CD8-positive, alpha-beta T cell (primary cell): ENCODE measurements at regions of chr15 and their contacts with region 1.

Region 1: DNA sequence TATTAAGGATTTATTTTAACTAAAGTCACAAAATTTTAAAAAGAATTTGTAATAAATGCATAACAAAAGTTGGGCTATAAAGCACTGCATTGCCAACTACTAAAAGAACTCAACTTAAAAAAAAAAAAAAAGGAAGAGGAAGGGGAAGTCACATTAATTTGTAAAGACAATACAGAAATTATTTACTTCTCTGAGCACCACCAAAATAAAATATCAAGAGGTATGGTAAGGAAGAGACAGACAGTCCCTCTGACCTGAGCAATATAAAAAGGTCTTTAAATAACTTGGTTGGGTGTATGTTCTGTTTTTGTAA is 83.5 kb downstream of the UACA start:
- DNase-seq: no peak
- ATAC-seq: no peak
- H3K4me3 ChIP-seq: no peak overlapping the region
- H3K4me3 Mint-ChIP-seq: no peak overlapping the region
- H3K27ac ChIP-seq: no peak overlapping the region
- H3K27ac Mint-ChIP-seq: no peak overlapping the region
- H3K4me1 ChIP-seq: no peaks in the 10 kb centered on the region
- H3K4me1 Mint-ChIP-seq: peaks cover 2% of the 10 kb centered on the region
- H3K27me3 ChIP-seq: no peaks in the 10 kb centered on the region
- H3K27me3 Mint-ChIP-seq: peaks cover 9% of the 10 kb centered on the region
- CTCF ChIP-seq: peak; percentile 23

Region 2: DNA sequence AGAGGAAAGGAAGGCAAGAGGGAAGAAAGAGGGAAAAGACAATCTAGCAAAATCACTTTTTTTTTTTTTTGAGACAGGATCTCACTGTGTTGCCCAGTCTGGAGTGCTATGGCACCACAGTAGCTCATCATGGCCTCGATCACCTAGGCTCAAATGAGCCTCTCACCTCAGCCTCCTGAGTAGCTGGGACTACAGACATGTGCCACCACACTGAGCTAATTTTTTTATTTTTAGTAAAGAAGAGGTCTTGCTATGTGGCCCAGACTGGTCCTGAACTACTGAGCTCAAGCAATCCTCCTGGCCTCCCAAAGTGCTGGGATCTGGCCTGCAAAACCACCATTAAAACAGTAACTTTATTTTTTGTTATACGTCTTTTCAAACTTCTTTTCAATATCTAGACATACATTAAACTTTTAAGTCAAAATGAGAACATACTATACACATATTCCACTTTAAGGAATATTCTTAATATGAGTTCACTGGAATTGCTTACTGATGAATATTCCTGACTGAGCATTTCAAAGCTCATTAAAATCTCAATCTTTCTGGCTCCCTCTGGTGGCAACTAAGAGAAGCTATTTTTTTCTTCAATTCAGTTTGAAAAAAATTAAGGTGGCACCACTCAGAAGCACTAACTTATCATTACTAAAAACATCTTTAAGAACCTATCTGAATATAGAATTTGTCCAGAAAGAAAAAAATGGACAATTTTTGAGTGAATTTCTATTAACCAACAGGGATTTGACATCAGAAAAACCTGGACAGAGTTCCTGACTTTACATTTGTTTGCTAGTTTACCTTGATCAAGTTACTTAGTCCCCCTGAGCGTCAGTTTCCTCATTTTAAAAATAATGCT is 42.6 kb after region 1 on chr15:
- CTCF ChIA-PET with region 1: interaction called, 39 read pairs
- POLR2A ChIA-PET with region 1: no interaction called
- intact Hi-C with region 1: loop called (anchors 10 kb)
- DNase-seq: peak in 2 of 9 experiments; percentile 57 to 70
- ATAC-seq: no peak
- H3K4me3 ChIP-seq: no peak overlapping the region
- H3K4me3 Mint-ChIP-seq: no peak overlapping the region
- H3K27ac ChIP-seq: no peak overlapping the region
- H3K27ac Mint-ChIP-seq: no peak overlapping the region
- H3K4me1 ChIP-seq: no peaks in the 10 kb centered on the region
- H3K4me1 Mint-ChIP-seq: no peaks in the 10 kb centered on the region
- H3K27me3 ChIP-seq: no peaks in the 10 kb centered on the region
- H3K27me3 Mint-ChIP-seq: peaks cover 11% of the 10 kb centered on the region
- CTCF ChIP-seq: peak; percentile 90

Region 3: DNA sequence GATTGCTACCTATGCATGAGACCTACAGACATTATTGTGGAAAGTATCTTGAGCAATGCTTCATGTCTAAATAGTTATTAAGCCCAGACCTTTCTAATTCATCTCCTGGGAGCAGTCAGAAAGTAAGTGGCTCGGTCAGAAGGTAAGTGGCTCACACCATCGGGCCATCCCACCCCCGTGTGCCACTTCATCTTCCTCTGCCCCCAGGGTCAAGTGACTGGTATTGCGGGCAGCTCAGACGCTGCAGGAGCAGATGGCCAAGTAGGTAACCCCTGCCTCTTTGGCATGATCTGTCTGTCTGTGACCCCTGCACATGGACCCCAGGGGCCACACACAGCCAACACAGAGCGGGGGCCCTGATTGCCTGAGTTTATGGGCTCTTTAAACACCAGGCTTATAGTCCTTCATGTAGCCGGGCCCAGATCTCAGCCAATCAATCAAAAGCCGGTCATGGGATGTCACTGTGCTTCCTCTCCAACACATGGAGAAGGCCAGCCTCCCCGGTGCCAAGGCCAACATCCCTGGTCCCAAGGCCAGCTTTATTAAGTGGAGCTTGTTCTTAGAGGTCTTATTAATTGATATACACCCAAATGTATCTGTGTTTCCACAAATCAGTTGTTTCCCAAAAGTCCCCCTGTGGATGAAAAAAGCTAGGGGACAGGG is 131.2 kb after region 1 on chr15:
- CTCF ChIA-PET with region 1: interaction called, 18 read pairs
- POLR2A ChIA-PET with region 1: no interaction called
- intact Hi-C with region 1: loop called (anchors 2 kb)
- DNase-seq: no peak
- ATAC-seq: no peak
- H3K4me3 ChIP-seq: no peak overlapping the region
- H3K4me3 Mint-ChIP-seq: no peak overlapping the region
- H3K27ac ChIP-seq: no peak overlapping the region
- H3K27ac Mint-ChIP-seq: no peak overlapping the region
- H3K4me1 ChIP-seq: no peaks in the 10 kb centered on the region
- H3K4me1 Mint-ChIP-seq: peaks cover 4% of the 10 kb centered on the region
- H3K27me3 ChIP-seq: no peaks in the 10 kb centered on the region
- H3K27me3 Mint-ChIP-seq: peaks cover 10% of the 10 kb centered on the region
- CTCF ChIP-seq: no peak

Region 4: DNA sequence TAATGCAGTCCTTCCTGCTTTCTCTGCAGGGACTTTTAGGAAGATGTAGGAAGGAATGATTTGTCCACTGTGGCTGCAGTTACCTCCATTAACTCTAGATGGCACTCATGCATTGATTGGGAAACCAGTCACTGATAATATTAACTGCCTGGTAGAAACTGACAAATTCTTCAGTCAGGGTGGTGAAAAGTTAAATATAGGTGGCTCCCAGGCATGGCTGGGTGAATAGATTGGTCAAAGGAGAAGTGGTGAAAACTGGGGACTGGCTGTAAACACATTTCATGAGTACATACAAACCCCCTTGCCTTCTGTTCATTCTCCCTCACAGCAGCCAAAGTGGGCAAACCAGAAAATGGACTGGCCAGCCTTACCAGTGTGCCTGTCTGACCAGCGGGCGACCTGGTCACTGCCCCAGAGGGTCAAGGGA is 768.8 kb after region 1 on chr15:
- CTCF ChIA-PET with region 1: no interaction called
- POLR2A ChIA-PET with region 1: no interaction called
- intact Hi-C with region 1: loop called in 1 of 2 experiments (anchors 10 kb)
- DNase-seq: peak in 2 of 9 experiments; percentile 5 to 13
- ATAC-seq: no peak
- H3K4me3 ChIP-seq: no peak overlapping the region
- H3K4me3 Mint-ChIP-seq: no peak overlapping the region
- H3K27ac ChIP-seq: no peak overlapping the region
- H3K27ac Mint-ChIP-seq: no peak overlapping the region
- H3K4me1 ChIP-seq: no peaks in the 10 kb centered on the region
- H3K4me1 Mint-ChIP-seq: no peaks in the 10 kb centered on the region
- H3K27me3 ChIP-seq: no peaks in the 10 kb centered on the region
- H3K27me3 Mint-ChIP-seq: no peaks in the 10 kb centered on the region
- CTCF ChIP-seq: peak; percentile 21